Adrenal gland (tissue), 19 donors: ENCODE measurements at regions of chr5 and their contacts with region 1.

Region 1: DNA sequence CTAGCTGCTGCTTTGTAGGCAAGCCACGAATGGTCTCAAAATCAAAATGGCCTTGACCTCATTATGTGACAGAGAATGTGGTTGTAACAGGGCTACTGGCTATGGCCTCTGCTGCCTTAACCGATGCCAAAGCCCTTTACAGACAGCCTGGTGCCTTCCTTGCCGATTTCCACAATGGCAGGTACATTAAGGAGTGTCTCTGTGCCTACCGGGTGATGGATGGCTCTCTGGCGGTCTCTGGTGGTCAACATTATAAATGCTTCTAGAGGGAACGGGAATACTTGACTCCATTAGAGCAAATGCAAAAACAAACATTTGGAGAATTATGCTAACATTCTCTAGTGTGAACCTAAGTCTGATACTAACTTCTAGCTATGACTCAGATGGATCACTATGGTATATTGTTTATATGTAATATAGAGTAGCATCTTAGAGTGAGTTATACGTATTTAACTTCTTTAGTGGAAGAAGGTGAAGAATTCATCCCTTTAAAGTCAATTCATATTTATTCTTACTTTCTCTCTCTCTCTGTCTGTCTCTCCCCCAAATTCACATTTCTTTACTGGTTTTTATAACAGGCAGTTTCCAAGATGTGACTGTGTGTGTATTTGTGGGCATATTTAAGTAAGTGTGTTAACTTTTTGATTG is 52.5 kb downstream of the RPS23 start:
- DNase-seq: peak; percentile 39 to 86 (median 62)
- H3K4me3 ChIP-seq: no peak overlapping the region
- H3K27ac ChIP-seq: no peak overlapping the region
- H3K4me1 ChIP-seq: no peaks in the 10 kb centered on the region
- H3K27me3 ChIP-seq: no peaks in the 10 kb centered on the region
- CTCF ChIP-seq: peak; percentile 65 to 87 (median 84)
- POLR2A ChIP-seq: no peak

Region 2: DNA sequence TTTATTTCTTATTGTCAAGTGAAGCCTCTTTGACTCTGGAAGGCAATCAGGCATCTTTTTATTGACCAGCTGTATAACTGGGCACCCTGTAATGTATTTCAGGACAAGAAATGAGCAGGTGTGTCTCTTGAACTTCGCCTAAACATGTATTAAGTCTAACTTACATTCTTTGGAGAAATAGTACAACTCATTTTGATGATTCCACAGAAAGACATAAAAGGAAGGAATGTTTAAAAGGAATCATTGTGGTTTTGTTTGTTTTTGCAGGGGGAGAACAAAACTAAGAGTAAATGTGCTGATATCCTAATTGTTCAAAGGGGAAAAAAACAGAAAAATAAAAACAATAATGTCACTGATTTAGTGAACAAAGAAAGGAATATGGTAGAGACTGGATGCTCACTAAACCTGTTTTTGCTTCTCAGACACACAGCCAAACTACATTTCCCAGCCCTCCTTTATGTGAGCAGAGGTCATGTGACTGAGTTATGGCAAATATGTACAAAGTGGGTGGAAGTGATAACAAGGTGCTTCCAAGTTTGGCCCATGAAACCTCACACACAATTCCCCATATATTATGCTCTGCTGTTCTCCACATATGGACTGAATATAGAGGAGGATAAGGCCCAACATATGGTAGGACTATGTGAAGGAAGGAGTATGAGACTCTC is 681.2 kb before region 1 on chr5:
- intact Hi-C with region 1: no loop called
- DNase-seq: no peak
- H3K4me3 ChIP-seq: no peak overlapping the region
- H3K27ac ChIP-seq: no peak overlapping the region
- H3K4me1 ChIP-seq: peaks cover 0 to 5% of the 10 kb centered on the region in 2 donors
- H3K27me3 ChIP-seq: no peaks in the 10 kb centered on the region
- CTCF ChIP-seq: no peak
- POLR2A ChIP-seq: no peak

Region 3: GRCh38 chr5:81866994-81867393 is 358.7 kb before region 1 on chr5:
- intact Hi-C with region 1: no loop called
- DNase-seq: no peak
- H3K4me3 ChIP-seq: no peak overlapping the region
- H3K27ac ChIP-seq: no peak overlapping the region
- H3K4me1 ChIP-seq: no peaks in the 10 kb centered on the region
- H3K27me3 ChIP-seq: no peaks in the 10 kb centered on the region
- CTCF ChIP-seq: no peak
- POLR2A ChIP-seq: no peak

Region 4: GRCh38 chr5:82045554-82046275 is 179.9 kb before region 1 on chr5:
- intact Hi-C with region 1: no loop called
- DNase-seq: no peak
- H3K4me3 ChIP-seq: no peak overlapping the region
- H3K27ac ChIP-seq: no peak overlapping the region
- H3K4me1 ChIP-seq: no peaks in the 10 kb centered on the region
- H3K27me3 ChIP-seq: no peaks in the 10 kb centered on the region
- CTCF ChIP-seq: no peak
- POLR2A ChIP-seq: no peak

Region 5: GRCh38 chr5:82174128-82174918 is 51.3 kb before region 1 on chr5:
- intact Hi-C with region 1: loop called in 1 of 2 experiments (anchors 10 kb)
- DNase-seq: peak; percentile 51 to 86 (median 72)
- H3K4me3 ChIP-seq: no peak overlapping the region
- H3K27ac ChIP-seq: no peak overlapping the region
- H3K4me1 ChIP-seq: no peaks in the 10 kb centered on the region
- H3K27me3 ChIP-seq: no peaks in the 10 kb centered on the region
- CTCF ChIP-seq: peak; percentile 30 to 64 (median 53)
- POLR2A ChIP-seq: no peak

Region 6: GRCh38 chr5:82413302-82414040 is 187.8 kb after region 1 on chr5:
- intact Hi-C with region 1: no loop called
- DNase-seq: no peak
- H3K4me3 ChIP-seq: no peak overlapping the region
- H3K27ac ChIP-seq: peak overlapping the region in 3 of 5 donors; percentile 33 to 85 (median 64)
- H3K4me1 ChIP-seq: peaks cover 10 to 17% of the 10 kb centered on the region in 2 donors
- H3K27me3 ChIP-seq: no peaks in the 10 kb centered on the region
- CTCF ChIP-seq: no peak
- POLR2A ChIP-seq: no peak